ENCODE measurements at regions of chr10 and their contacts with region 1.

Region 1: DNA sequence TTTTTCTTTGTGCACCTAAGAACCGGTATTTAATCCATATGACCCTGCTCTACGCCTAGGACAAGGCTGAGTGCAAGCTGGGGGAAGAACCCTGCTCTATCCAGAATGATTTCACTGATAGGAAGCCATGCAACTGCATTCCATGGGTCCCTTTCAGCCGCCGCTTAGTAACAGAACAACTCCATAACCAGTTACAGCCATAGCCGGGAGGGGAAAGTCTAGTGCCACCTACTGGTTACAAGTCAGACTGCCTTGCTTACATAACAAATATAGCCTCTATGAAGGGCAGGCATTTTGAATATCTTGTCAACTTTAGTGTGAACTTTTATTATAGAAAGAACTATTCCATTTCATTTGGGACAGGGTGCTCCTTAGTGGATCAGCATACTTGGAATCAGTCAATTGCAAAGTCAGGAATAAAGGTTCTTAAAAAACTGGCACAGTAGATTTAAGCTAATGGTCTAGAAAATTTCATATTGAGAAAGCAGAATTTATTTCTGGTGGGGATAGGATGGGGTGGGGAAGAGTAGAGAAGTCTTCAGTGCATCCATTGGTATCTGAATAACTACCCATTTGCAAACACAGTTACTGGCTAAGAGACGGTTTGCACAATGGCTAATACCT is 521.7 kb downstream of the ADRA2A start:
- DNase-seq: peak; percentile 2
- H3K4me3 ChIP-seq: no peak overlapping the region
- H3K27me3 ChIP-seq: no peaks in the 10 kb centered on the region
- CTCF ChIP-seq: peak; percentile 75

Region 2: GRCh38 chr10:111076191-111076681 is 522.3 kb before region 1 on chr10:
- CTCF ChIA-PET with region 1: interaction called, 11 read pairs
- POLR2A ChIA-PET with region 1: no interaction called
- DNase-seq: no peak
- H3K4me3 ChIP-seq: peak overlapping the region; percentile 20
- H3K27me3 ChIP-seq: peaks cover 39% of the 10 kb centered on the region
- CTCF ChIP-seq: peak; percentile 87

Region 3: GRCh38 chr10:111612273-111612672 is 13.7 kb after region 1 on chr10:
- CTCF ChIA-PET with region 1: interaction called, 11 read pairs
- POLR2A ChIA-PET with region 1: no interaction called
- DNase-seq: no peak
- H3K4me3 ChIP-seq: no peak overlapping the region
- H3K27me3 ChIP-seq: no peaks in the 10 kb centered on the region
- CTCF ChIP-seq: no peak